B cell (primary cell): ENCODE measurements at regions of chr12 and their contacts with region 1.

Region 1: DNA sequence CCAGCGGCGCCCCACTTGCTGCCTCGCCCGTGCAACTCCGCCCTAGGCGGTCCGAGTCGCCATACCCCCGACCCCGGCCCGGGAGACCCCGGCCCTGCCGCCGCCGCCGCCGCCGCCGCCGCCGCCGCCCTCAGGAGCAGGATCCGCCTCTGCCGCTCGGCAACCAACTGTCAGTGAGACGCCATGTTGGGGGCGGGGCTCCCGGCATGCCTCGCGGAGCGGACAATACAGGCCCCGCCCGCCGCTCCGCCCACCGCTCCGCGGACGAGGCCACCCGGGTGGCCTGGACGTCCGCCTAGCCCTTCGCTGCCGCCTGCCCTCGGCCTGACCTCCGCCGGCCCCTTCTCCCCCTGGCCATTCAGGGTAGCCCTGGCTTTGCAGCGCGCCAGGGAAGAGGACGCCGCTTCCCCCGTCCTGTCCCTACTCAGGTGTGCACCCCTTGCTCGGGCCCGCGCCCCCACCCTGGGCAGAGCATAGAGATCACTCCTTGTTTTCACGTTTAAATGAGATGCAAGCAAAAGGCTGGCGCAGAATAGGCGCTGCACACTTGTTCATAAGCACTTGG is at the start of gene HECTD4:
- DNase-seq: peak; percentile 93
- ATAC-seq: peak; percentile 97
- H3K4me3 ChIP-seq: peak within 1 kb of the TSS; percentile 50 to 80 (median 71)
- H3K4me3 Mint-ChIP-seq: peak within 1 kb of the TSS; percentile 97
- H3K27ac ChIP-seq: peak within 1 kb of the TSS; percentile 48 to 68
- H3K27ac Mint-ChIP-seq: peak within 1 kb of the TSS; percentile 94
- H3K4me1 ChIP-seq: peaks cover 19 to 23% of the 10 kb centered on the region in 2 donors
- H3K4me1 Mint-ChIP-seq: peaks cover 28% of the 10 kb centered on the region
- H3K27me3 ChIP-seq: no peaks in the 10 kb centered on the region
- H3K27me3 Mint-ChIP-seq: no peaks in the 10 kb centered on the region
- CTCF ChIP-seq: no peak
- total RNA-seq, gene HECTD4: 92.2 and 93.1 TPM in 2 replicates

Region 2: DNA sequence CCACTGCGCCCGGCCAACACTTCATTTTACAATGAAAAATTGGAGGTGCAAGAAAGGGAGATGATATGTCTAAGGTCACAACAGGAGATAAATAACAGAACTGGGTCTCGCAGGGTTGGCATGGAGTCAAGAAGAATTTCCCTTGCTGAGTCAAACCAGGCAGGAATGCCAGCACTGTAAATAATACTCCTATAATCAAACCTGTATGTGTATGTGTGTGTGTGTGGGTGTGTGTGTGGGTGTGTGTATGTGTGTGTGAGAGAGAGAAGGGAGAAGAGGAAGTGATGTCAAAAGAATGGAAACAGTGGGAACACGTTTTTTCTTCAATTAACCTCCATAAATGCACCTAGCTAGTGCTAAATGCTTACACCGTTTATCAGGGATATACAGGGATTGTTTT is 439.8 kb before region 1 on chr12:
- CTCF ChIA-PET with region 1: interaction called, 26 read pairs
- POLR2A ChIA-PET with region 1: no interaction called
- intact Hi-C with region 1: loop called (anchors 1 kb)
- DNase-seq: no peak
- ATAC-seq: no peak
- H3K4me3 ChIP-seq: no peak overlapping the region
- H3K4me3 Mint-ChIP-seq: no peak overlapping the region
- H3K27ac ChIP-seq: no peak overlapping the region
- H3K27ac Mint-ChIP-seq: no peak overlapping the region
- H3K4me1 ChIP-seq: no peaks in the 10 kb centered on the region
- H3K4me1 Mint-ChIP-seq: no peaks in the 10 kb centered on the region
- H3K27me3 ChIP-seq: no peaks in the 10 kb centered on the region
- H3K27me3 Mint-ChIP-seq: no peaks in the 10 kb centered on the region
- CTCF ChIP-seq: no peak

Region 3: GRCh38 chr12:112108201-112109079 is 273.9 kb before region 1 on chr12 and contains the start of gene NAA25:
- CTCF ChIA-PET with region 1: no interaction called
- POLR2A ChIA-PET with region 1: no interaction called
- intact Hi-C with region 1: loop called (anchors 5 kb)
- DNase-seq: peak; percentile 91
- ATAC-seq: peak; percentile 72
- H3K4me3 ChIP-seq: peak within 1 kb of the TSS; percentile 84 to 100 (median 97)
- H3K4me3 Mint-ChIP-seq: peak within 1 kb of the TSS; percentile 99
- H3K27ac ChIP-seq: peak within 1 kb of the TSS; percentile 81 to 88
- H3K27ac Mint-ChIP-seq: peak within 1 kb of the TSS; percentile 99
- H3K4me1 ChIP-seq: peaks cover 25 to 29% of the 10 kb centered on the region in 2 donors
- H3K4me1 Mint-ChIP-seq: peaks cover 39% of the 10 kb centered on the region
- H3K27me3 ChIP-seq: no peaks in the 10 kb centered on the region
- H3K27me3 Mint-ChIP-seq: no peaks in the 10 kb centered on the region
- CTCF ChIP-seq: no peak
- total RNA-seq, gene NAA25: 36.5 and 40.8 TPM in 2 replicates

Region 4: GRCh38 chr12:112198120-112198733 is 184.1 kb before region 1 on chr12:
- CTCF ChIA-PET with region 1: interaction called, 88 read pairs
- POLR2A ChIA-PET with region 1: no interaction called
- intact Hi-C with region 1: no loop called
- DNase-seq: peak; percentile 63
- ATAC-seq: peak; percentile 78
- H3K4me3 ChIP-seq: no peak overlapping the region
- H3K4me3 Mint-ChIP-seq: no peak overlapping the region
- H3K27ac ChIP-seq: no peak overlapping the region
- H3K27ac Mint-ChIP-seq: no peak overlapping the region
- H3K4me1 ChIP-seq: no peaks in the 10 kb centered on the region
- H3K4me1 Mint-ChIP-seq: no peaks in the 10 kb centered on the region
- H3K27me3 ChIP-seq: no peaks in the 10 kb centered on the region
- H3K27me3 Mint-ChIP-seq: no peaks in the 10 kb centered on the region
- CTCF ChIP-seq: peak; percentile 71

Region 5: DNA sequence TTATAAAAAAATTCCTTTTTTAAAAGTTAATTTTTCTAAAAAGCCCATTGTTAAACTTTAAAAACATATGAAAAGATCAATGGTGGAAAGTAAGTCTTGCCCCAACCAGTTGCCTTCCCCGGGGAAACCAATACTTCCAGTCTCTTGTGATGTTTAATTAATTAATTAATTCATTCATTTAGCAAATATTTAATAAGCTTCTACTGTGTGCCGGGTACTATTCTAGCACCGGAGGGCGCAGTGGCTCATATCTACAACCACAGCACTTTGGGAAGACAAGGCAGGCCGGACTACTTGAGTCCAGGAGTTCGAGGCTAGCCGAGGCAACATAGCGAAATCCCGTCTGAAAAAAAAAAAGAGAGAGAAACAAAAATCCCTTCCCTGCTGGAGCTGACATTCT is 87.5 kb before region 1 on chr12:
- CTCF ChIA-PET with region 1: interaction called, 12 read pairs
- POLR2A ChIA-PET with region 1: no interaction called
- intact Hi-C with region 1: loop called (anchors 5 kb)
- DNase-seq: peak; percentile 26
- ATAC-seq: no peak
- H3K4me3 ChIP-seq: no peak overlapping the region
- H3K4me3 Mint-ChIP-seq: no peak overlapping the region
- H3K27ac ChIP-seq: no peak overlapping the region
- H3K27ac Mint-ChIP-seq: no peak overlapping the region
- H3K4me1 ChIP-seq: no peaks in the 10 kb centered on the region
- H3K4me1 Mint-ChIP-seq: no peaks in the 10 kb centered on the region
- H3K27me3 ChIP-seq: no peaks in the 10 kb centered on the region
- H3K27me3 Mint-ChIP-seq: no peaks in the 10 kb centered on the region
- CTCF ChIP-seq: no peak

Region 6: GRCh38 chr12:112409064-112409905 is 27.0 kb after region 1 on chr12 and contains the start of gene RPL6:
- CTCF ChIA-PET with region 1: interaction called, 8 read pairs
- POLR2A ChIA-PET with region 1: no interaction called
- intact Hi-C with region 1: loop called (anchors 1 kb)
- DNase-seq: peak; percentile 91
- ATAC-seq: peak; percentile 90
- H3K4me3 ChIP-seq: peak within 1 kb of the TSS; percentile 68 to 97 (median 96)
- H3K4me3 Mint-ChIP-seq: peak within 1 kb of the TSS; percentile 100
- H3K27ac ChIP-seq: peak within 1 kb of the TSS; percentile 83 to 91
- H3K27ac Mint-ChIP-seq: peak within 1 kb of the TSS; percentile 100
- H3K4me1 ChIP-seq: peaks cover 15 to 24% of the 10 kb centered on the region in 2 donors
- H3K4me1 Mint-ChIP-seq: peaks cover 28% of the 10 kb centered on the region
- H3K27me3 ChIP-seq: no peaks in the 10 kb centered on the region
- H3K27me3 Mint-ChIP-seq: no peaks in the 10 kb centered on the region
- CTCF ChIP-seq: no peak
- total RNA-seq, gene RPL6: 1,537 and 1,621 TPM in 2 replicates